ENCODE measurements at regions of chr6 and their contacts with region 1.

Region 1: DNA sequence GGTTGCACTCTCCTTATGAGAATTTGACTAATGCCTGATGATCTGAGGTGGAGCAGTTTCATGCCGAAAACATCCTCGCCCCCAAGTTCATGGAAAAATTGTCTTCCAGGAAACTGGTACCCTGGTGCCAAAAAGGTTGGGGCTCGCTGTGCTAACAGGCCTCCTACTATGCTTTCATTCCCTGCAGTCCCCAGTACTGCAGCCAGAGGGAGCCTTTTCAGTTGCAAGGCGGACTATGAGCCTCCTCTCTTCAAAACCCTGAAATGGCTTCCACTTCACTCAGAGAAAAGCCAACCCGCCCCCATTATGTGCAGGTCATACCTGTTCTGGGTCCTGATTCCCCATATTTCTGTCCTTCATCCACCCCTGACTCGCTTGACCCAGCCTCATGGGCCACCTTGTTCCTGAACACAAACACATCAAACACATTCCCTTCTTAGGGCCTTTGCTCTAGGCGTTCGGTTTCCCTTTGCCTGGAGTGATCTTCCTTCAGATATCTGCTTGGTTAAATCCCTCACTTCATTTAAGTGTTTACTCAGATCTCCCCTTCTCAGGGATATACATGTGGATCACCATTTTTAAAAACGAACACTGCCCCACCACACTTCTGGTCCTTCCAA is 173.7 kb downstream of the PHACTR1 start:
- DNase-seq: no peak
- ATAC-seq: no peak

Region 2: DNA sequence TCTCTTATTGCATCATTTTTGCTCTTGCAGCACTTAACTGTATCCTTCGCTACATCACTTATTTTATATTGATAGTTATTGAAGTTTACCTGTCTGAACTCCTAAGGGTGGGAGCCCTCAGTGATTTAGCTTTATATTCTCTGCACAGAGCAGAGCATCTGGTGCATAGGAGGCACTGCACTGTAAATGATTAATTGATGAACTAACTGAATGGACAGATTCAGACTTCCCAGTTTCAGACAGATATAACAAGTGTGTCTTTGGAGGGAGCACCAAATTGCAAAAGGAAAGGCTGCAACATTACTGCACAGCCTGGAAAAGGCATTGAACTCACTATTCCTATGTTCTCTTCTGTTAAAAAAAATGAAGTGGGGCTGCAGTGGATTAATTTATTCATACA is 439.8 kb before region 1 on chr6:
- intact Hi-C with region 1: no loop called
- DNase-seq: no peak
- ATAC-seq: no peak

Region 3: GRCh38 chr6:12572896-12573827 is 317.1 kb before region 1 on chr6:
- intact Hi-C with region 1: no loop called
- DNase-seq: no peak
- ATAC-seq: no peak

Region 4: GRCh38 chr6:12637960-12638641 is 252.2 kb before region 1 on chr6:
- intact Hi-C with region 1: loop called (anchors 10 kb)
- DNase-seq: peak; percentile 52
- ATAC-seq: peak; percentile 38

Region 5: GRCh38 chr6:12761381-12762120 is 128.7 kb before region 1 on chr6:
- intact Hi-C with region 1: no loop called
- DNase-seq: no peak
- ATAC-seq: no peak

Measured in Right ventricle myocardium superior (tissue), 1 donor.